Tibial artery (tissue), 4 donors: ENCODE measurements at regions of chr17 and their contacts with region 1.

Region 1: DNA sequence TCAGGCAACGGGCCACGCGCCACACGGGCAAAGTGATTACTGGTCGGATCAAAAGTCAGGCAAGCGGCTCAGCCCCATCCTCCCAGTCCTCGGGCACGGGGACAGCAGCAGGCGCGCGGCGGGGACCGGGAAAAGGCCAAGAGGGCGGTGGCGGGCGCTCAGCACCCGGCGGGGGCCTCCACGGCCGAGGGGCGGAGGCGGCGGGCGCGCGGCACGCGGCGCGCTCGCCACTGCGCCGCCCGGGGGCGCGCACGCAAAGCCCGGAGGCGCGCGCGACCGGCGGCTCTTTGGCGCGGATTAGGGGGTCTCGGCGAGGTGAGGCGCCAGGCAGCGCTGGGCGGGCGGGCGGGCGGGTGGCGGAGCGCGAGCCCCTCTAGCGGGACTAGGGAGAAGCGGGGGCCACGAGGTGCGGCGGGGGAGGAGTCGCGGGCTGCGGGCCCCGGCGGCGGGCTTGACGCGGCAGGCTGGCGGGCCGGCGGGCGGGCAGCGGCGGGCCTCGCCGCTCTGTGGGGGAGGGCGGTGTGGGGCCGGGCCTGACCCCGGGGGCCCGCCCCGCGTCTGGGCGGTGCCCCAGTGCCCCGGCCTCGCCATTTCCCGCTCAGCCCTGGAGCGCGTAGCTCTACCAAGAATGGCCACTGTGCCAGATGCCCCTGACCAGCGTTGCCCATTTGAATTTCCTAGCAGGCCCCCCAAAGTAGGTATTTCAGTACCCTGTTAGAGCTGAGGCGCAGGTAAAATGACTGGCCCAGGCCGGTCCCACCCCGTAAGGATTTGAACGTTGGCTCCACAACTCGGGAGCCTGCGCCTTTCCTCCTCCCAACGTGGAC is at the starts of genes ACACA and TADA2A:
- DNase-seq: peak; percentile 71 to 87
- H3K4me3 ChIP-seq: peak within 1 kb of the TSS; percentile 76 to 82
- H3K27ac ChIP-seq: peak within 1 kb of the TSS; percentile 84 to 94
- H3K4me1 ChIP-seq: peaks cover 0 to 23% (median 12%) of the 10 kb centered on the region in 4 donors
- H3K27me3 ChIP-seq: no peaks in the 10 kb centered on the region
- CTCF ChIP-seq: peak in 1 of 2 experiments; percentile 27

Region 2: DNA sequence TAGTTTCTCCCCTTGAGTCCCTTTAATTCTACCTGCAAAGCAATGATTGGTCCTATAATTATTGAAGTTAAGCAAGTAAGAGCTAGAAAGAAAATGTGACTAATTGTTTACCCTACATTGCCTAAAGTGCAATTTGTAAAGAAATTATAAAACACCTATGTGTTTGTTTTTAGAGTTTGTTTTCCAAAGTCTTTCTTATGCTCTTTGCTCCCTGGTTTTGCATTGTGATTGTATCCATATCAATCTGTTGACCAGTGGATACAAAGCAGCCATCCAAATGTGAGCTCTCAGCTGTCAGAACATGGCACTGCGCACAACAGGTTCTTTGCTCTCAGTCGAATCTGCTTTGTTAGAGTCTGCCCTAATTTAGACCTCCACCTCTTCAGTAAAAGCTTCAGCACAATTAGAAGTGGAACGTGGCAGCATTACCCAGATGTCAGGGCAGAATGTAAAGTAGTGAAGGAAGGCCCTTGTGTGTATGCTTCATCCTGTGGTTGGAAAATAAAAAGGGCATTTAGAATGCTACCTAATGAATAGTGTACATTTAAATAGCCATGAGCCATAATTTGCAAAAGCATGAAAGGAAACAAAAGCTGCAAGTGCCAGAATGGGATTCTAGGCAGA is 387.6 kb before region 1 on chr17:
- intact Hi-C with region 1: no loop called
- DNase-seq: no peak
- H3K4me3 ChIP-seq: no peak overlapping the region
- H3K27ac ChIP-seq: no peak overlapping the region
- H3K4me1 ChIP-seq: no peaks in the 10 kb centered on the region
- H3K27me3 ChIP-seq: no peaks in the 10 kb centered on the region
- CTCF ChIP-seq: no peak

Region 3: GRCh38 chr17:37358830-37359681 is 47.8 kb before region 1 on chr17:
- intact Hi-C with region 1: loop called (anchors 5 kb)
- DNase-seq: peak; percentile 93 to 98
- H3K4me3 ChIP-seq: peak overlapping the region; percentile 85 to 91
- H3K27ac ChIP-seq: peak overlapping the region; percentile 84 to 88
- H3K4me1 ChIP-seq: peaks cover 0 to 22% (median 13%) of the 10 kb centered on the region in 4 donors
- H3K27me3 ChIP-seq: no peaks in the 10 kb centered on the region
- CTCF ChIP-seq: peak; percentile 31 to 59